Activated CD4-positive, alpha-beta memory T cell treated with anti-CD3 and anti-CD28 coated beads for 36 hours (primary cell): ENCODE measurements at regions of chr7 and their contacts with region 1.

Region 1: DNA sequence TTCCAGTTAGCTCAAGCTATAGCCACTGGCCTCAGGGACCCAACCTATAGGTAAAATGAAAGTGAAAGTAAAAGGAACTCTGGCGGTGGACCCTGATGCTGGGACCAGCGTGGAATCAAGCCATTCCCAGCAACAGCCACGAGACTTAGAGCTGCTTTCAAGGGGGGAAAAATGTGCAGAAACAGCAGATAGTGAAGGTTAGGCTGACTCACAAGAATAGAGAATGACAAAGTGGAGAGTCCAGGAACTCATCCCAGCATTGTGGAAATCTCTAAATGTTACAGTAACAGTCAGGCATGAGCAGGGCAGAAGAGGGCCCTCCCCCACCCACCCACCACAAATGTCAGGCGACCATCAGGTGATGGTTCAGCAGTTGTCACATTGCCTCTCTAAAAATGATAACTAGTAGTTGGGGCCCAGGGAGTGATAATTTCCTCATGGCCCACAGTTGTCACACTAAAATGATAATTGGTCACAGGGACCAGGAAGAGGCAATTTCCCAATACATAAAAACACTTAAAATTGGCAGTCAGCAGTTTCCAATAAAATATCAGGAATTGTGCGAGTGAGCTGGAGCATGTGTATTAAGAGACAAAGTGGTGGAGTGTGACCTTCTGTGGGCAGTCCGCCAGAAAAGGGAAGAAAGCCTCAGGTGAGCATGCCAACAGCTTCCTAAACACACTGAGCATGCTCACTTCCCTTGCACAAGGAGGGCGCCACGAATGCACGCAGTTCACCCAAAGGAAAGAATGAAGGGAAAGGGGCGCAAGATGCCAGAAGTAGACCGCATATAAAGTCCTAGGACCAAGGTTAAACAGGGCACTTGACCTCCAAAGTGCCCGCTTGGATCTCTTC is 129.8 kb upstream of the PPP1R3A start:
- DNase-seq: peak; percentile 13
- H3K4me3 Mint-ChIP-seq: peak overlapping the region; percentile 62
- H3K27ac Mint-ChIP-seq: peak overlapping the region; percentile 55
- H3K4me1 Mint-ChIP-seq: peaks cover 12% of the 10 kb centered on the region
- H3K27me3 Mint-ChIP-seq: no peaks in the 10 kb centered on the region

Region 2: GRCh38 chr7:113867325-113867724 is 181.3 kb before region 1 on chr7:
- CTCF ChIA-PET with region 1: no interaction called
- POLR2A ChIA-PET with region 1: no interaction called
- intact Hi-C with region 1: no loop called
- DNase-seq: no peak
- H3K4me3 Mint-ChIP-seq: no peak overlapping the region
- H3K27ac Mint-ChIP-seq: no peak overlapping the region
- H3K4me1 Mint-ChIP-seq: no peaks in the 10 kb centered on the region
- H3K27me3 Mint-ChIP-seq: no peaks in the 10 kb centered on the region

Region 3: GRCh38 chr7:114269714-114270113 is 221.1 kb after region 1 on chr7:
- CTCF ChIA-PET with region 1: no interaction called
- POLR2A ChIA-PET with region 1: no interaction called
- intact Hi-C with region 1: loop called (anchors 1 kb)
- DNase-seq: no peak
- H3K4me3 Mint-ChIP-seq: no peak overlapping the region
- H3K27ac Mint-ChIP-seq: no peak overlapping the region
- H3K4me1 Mint-ChIP-seq: no peaks in the 10 kb centered on the region
- H3K27me3 Mint-ChIP-seq: no peaks in the 10 kb centered on the region

Region 4: DNA sequence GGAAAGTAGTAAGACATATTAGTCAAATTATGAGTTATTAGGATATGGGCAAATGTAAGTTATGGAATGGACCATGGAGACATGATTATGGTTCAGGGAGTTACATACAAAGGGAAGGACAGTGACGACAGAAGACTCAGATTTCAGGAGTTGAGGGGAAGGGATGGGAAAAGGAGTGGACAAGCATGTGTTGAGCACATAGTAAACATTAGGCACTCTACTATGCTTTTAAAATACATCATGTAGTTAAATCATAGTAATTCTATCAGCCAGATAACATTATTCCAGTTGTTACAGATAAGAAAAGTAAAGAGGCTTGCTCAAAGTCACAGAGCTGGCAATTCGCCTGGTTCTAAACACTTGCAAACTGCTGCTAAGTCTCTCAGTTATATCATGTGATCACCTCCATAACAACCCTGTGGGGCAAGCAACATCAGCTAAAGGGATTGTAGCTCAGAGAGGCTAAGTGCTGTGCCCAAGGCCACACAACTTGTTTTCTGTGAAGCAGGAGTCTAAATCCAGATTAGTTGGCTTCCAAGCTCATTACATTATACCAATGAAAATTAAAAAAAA is 758.1 kb after region 1 on chr7:
- CTCF ChIA-PET with region 1: no interaction called
- POLR2A ChIA-PET with region 1: no interaction called
- intact Hi-C with region 1: loop called (anchors 10 kb)
- DNase-seq: no peak
- H3K4me3 Mint-ChIP-seq: no peak overlapping the region
- H3K27ac Mint-ChIP-seq: no peak overlapping the region
- H3K4me1 Mint-ChIP-seq: peaks cover 18% of the 10 kb centered on the region
- H3K27me3 Mint-ChIP-seq: no peaks in the 10 kb centered on the region